ENCODE measurements at regions of chr1 and their contacts with region 1.

Region 1: DNA sequence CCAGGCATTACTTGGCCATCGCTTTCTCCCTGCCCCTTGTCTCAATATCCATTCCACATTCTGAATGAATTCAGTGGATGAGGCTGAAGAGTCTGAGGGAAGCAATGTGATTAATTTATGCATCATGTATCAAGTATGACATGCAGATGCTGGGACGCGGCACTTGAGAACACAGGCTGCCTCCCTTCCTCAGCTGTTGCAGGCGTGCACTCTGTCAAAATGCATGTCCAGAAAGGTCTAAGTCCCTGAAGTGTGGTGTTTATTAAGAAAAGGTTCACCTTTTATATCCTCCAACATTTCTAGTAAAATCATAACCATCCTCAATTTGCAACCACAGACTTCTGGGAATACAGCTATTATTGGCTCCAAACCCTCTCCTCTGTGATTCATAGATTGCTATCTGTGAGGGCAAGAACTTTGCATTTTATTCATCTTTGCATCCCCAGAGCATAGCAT is 22.6 kb upstream of the RAB3GAP2 start:
- DNase-seq: no peak
- ATAC-seq: no peak
- H3K4me3 Mint-ChIP-seq: no peak overlapping the region
- H3K27ac Mint-ChIP-seq: no peak overlapping the region
- H3K4me1 Mint-ChIP-seq: no peaks in the 10 kb centered on the region
- H3K27me3 Mint-ChIP-seq: peaks cover 26% of the 10 kb centered on the region

Region 2: DNA sequence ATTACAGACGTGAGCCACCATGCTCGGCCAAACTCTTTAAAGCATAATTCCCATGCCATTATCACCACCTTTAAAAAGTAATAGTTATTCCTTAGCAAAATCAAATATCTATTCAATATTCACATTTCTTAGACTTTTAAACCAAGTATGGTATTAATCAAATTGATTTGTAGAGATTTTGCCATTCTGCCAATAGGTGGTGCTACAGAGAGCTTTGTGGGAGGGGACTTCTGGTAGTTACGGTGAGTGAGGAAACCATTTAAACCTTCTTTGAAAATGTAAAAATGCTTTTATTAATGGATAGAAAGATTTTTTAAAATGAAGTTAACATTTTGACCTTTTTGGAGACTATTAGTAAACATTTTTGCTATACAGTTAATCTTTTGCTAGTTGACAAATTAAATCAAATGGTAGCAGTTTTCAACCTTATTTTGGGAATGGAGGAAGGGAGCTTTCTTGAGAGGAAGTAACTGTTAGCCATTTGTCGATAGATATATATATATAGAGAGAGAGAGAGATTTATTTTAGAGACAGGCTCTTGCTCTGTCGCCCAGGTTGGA is 181.7 kb before region 1 on chr1:
- CTCF ChIA-PET with region 1: no interaction called
- DNase-seq: no peak
- ATAC-seq: peak; percentile 77
- H3K4me3 Mint-ChIP-seq: no peak overlapping the region
- H3K27ac Mint-ChIP-seq: no peak overlapping the region
- H3K4me1 Mint-ChIP-seq: peaks cover 7% of the 10 kb centered on the region
- H3K27me3 Mint-ChIP-seq: no peaks in the 10 kb centered on the region

Region 3: DNA sequence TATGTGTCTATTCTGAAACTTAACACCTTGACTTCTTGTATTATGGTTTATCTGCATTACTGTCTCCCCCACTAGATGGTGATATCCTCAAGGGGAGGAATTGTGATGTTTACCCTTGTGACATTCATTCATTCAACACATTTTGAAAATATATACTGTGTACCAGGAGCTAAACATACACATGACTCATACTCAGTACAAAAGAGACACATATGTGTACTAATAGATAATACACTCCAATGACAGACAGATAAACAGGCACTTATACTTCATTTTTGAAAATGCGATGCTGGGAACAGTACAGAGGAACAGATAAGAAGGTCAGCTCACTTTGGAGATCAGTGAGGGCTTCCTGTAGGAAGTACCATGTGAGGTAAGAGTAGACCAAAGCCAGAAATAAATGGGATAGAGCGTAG is 13.7 kb before region 1 on chr1:
- CTCF ChIA-PET with region 1: interaction called, 14 read pairs
- DNase-seq: no peak
- ATAC-seq: no peak
- H3K4me3 Mint-ChIP-seq: no peak overlapping the region
- H3K27ac Mint-ChIP-seq: no peak overlapping the region
- H3K4me1 Mint-ChIP-seq: no peaks in the 10 kb centered on the region
- H3K27me3 Mint-ChIP-seq: peaks cover 13% of the 10 kb centered on the region

Measured in activated CD8-positive, alpha-beta memory T cell treated with anti-CD3 and anti-CD28 coated beads, Interleukin-2, amount 10 ng/mL, durations not matched to agents 7 days and 5 days (primary cell).